ENCODE measurements at regions of chr1 and their contacts with region 1.

Region 1: DNA sequence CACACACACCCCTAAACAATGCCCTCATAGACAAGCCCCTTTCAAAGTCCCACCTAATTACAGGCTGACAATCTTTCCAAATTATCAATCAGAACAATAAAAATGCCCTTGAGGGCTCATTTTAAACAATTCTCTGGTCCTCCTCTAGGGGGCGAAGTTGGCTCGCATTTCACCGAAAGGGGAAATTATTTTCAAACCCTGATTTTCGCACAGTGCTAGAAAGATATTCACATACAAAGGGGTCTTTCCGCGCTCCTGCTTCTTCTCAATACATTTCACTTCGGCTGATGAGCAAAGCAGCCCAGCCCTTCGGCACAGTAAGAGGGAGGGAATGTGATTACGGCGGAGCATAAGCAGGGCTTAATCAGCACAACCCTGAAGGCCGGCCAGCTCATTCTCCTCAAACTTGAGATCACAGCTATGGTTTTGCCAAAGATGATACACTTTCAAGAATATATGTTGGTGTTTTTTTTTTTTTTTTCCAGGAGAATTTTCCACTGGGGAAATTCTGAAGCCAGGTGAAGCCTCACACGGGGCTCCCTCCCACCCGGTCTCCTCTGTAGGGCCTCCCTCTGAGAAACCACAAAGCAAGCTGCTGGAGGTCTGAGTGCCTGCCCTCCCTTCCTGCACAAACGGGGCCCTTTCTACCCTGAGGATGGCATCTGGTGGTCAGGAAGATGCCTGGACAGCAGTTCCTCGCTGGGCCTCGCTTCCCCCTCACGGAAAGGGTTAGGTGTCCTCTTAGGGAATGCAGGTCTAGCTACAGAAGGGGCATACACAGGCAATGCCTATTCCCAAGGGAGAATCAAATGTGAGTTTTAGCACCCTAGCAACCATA is 66.9 kb downstream of the GNG12 start:
- DNase-seq: peak; percentile 63
- H3K4me3 Mint-ChIP-seq: peak overlapping the region; percentile 0
- H3K27ac Mint-ChIP-seq: peak overlapping the region; percentile 57
- H3K4me1 Mint-ChIP-seq: peaks cover 17% of the 10 kb centered on the region
- H3K27me3 Mint-ChIP-seq: no peaks in the 10 kb centered on the region
- CTCF ChIP-seq: peak; percentile 84

Region 2: DNA sequence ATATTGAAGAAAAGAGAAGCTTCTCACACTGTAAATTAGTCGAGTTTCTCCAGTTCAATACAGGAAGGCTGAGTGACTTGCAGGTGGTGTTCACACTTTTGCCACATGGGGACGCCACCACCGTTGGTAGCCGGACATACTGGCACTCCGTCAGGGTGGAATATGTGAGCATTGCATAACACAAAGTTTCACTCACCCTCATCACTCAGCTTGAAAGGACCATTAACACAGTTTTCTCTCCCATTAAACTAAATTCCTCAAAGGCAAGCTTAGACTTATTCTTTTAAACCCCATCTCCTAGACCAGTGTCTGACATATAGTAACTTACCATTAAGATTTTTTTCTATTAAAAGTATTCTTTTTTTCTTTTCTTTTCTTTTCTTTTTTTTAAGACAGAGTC is 230.9 kb before region 1 on chr1:
- CTCF ChIA-PET with region 1: interaction called, 386 read pairs
- POLR2A ChIA-PET with region 1: interaction called, 21 read pairs
- intact Hi-C with region 1: no loop called
- DNase-seq: peak; percentile 85
- H3K4me3 Mint-ChIP-seq: no peak overlapping the region
- H3K27ac Mint-ChIP-seq: peak overlapping the region; percentile 12
- H3K4me1 Mint-ChIP-seq: peaks cover 6% of the 10 kb centered on the region
- H3K27me3 Mint-ChIP-seq: no peaks in the 10 kb centered on the region
- CTCF ChIP-seq: peak; percentile 95

Region 3: GRCh38 chr1:67599085-67599484 is 167.3 kb before region 1 on chr1:
- CTCF ChIA-PET with region 1: no interaction called
- POLR2A ChIA-PET with region 1: no interaction called
- intact Hi-C with region 1: no loop called
- DNase-seq: no peak
- H3K4me3 Mint-ChIP-seq: no peak overlapping the region
- H3K27ac Mint-ChIP-seq: no peak overlapping the region
- H3K4me1 Mint-ChIP-seq: no peaks in the 10 kb centered on the region
- H3K27me3 Mint-ChIP-seq: no peaks in the 10 kb centered on the region
- CTCF ChIP-seq: no peak

Region 4: DNA sequence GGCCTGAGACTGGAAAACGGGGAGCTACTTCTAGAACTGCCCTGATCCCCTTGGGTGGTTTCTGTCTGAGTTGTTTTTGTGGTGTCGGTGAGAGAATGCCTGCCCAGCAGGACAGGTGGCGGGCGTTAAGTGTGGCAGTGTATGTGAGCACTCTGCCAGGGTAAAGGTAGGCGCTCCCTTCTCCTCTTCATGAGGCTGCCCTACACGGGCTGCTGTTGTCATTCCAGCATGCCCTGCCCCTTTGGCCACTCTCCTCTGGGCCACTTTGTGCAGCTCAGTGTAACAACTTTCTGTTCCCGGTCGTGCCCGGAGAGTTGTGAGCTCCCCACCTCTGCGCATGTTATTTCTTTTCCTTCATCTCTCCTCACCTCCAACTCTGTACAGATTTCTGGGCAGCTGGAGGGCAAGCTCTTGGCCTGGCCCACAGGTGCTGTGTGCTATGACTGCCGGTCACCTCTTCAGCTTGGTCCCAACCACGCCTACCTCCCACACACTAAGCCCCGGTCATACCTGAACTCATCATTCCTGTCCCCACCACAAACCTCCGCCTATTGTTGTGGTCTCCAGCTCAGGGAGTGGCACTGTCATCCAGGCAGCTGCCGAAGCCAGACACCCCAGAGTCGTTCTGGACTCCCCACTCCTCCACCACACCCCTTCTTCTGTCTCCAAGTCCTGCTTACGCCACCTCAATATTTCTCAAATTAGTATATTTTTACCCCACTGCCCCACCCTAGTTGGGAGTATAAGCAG is 12.4 kb before region 1 on chr1:
- CTCF ChIA-PET with region 1: interaction called, 49 read pairs
- POLR2A ChIA-PET with region 1: interaction called, 14 read pairs
- intact Hi-C with region 1: no loop called
- DNase-seq: peak; percentile 69
- H3K4me3 Mint-ChIP-seq: peak overlapping the region; percentile 38
- H3K27ac Mint-ChIP-seq: peak overlapping the region; percentile 89
- H3K4me1 Mint-ChIP-seq: peaks cover 56% of the 10 kb centered on the region
- H3K27me3 Mint-ChIP-seq: no peaks in the 10 kb centered on the region
- CTCF ChIP-seq: no peak

Region 5: GRCh38 chr1:67791686-67792475 is 25.5 kb after region 1 on chr1:
- CTCF ChIA-PET with region 1: interaction called, 28 read pairs
- POLR2A ChIA-PET with region 1: interaction called, 3 read pairs
- intact Hi-C with region 1: no loop called
- DNase-seq: peak; percentile 72
- H3K4me3 Mint-ChIP-seq: peak overlapping the region; percentile 28
- H3K27ac Mint-ChIP-seq: peak overlapping the region; percentile 88
- H3K4me1 Mint-ChIP-seq: peaks cover 65% of the 10 kb centered on the region
- H3K27me3 Mint-ChIP-seq: no peaks in the 10 kb centered on the region
- CTCF ChIP-seq: no peak

Region 6: DNA sequence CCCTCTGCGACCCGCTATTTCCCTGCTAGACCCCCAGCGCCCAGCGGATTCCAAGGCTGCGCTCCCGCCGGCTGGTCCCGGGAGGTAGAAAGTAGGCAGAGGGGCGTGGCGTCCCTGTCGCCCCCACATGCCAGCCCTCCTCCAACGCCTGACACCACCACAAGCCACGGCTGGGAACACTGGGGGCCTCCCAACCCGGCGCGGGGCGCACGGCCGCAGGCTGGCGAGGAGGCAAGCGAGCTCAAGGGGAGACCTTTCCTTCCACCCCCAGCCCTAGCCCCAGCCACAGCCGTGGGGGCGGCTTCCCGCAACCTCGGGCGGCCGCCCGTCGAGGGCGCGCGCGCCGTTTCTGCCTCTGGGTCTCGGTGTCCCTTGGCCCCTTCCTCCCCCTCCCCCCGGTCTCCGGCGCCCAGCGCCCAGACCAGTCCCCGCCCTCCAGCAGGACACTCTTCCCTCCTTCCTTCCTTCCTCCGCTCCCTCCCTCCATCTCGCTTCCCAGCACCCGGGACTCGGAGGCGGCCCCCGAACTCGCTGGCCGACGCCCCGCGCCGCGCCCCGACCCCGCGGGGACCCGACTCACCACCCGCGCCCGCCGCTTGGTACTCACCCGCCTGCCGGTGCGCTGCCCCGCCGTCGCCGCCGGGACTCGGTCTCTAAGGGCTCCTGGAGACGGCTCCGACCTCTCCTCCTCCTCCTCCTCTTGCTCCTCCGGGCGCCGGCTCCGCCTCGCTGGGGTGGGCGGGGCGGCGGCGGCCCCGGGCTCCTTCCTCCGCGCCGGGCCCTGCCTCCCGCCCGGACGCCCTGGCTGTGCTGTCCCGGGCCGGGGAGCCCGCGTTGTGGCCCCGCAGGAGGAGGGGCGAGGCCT is 66.6 kb after region 1 on chr1 and contains the start of gene GNG12:
- CTCF ChIA-PET with region 1: interaction called, 174 read pairs
- POLR2A ChIA-PET with region 1: interaction called, 56 read pairs
- intact Hi-C with region 1: loop called (anchors 1 kb)
- DNase-seq: peak; percentile 83
- H3K4me3 Mint-ChIP-seq: peak within 1 kb of the TSS; percentile 92
- H3K27ac Mint-ChIP-seq: peak within 1 kb of the TSS; percentile 99
- H3K4me1 Mint-ChIP-seq: peaks cover 28% of the 10 kb centered on the region
- H3K27me3 Mint-ChIP-seq: no peaks in the 10 kb centered on the region
- CTCF ChIP-seq: no peak
- total RNA-seq, gene GNG12: 117 and 135 TPM in 2 replicates

Region 7: DNA sequence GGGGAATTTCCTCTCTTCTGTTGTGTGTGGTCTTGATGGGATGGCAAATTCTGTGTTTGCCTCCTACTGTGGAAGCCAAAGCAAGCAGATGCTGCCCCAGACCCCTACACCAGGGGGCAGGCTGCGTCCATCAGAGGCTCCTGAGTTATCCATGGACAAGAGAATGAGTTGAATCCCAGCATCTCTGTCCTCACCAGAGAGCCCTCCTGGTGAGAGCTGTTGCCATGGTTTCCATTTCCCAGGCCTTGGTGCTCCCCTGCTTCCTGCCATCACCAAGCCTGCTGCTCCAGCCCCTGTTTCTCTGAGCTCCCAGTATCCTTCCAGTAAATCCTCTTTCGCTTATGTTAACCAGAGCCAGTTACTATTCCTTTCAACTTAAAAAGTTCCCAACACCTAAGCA is 87.3 kb after region 1 on chr1:
- CTCF ChIA-PET with region 1: interaction called, 70 read pairs
- POLR2A ChIA-PET with region 1: interaction called, 4 read pairs
- intact Hi-C with region 1: loop called (anchors 1 kb)
- DNase-seq: peak; percentile 71
- H3K4me3 Mint-ChIP-seq: no peak overlapping the region
- H3K27ac Mint-ChIP-seq: no peak overlapping the region
- H3K4me1 Mint-ChIP-seq: peaks cover 16% of the 10 kb centered on the region
- H3K27me3 Mint-ChIP-seq: no peaks in the 10 kb centered on the region
- CTCF ChIP-seq: peak; percentile 92

Region 8: GRCh38 chr1:68120136-68120791 is 353.9 kb after region 1 on chr1:
- CTCF ChIA-PET with region 1: interaction called, 28 read pairs
- POLR2A ChIA-PET with region 1: no interaction called
- intact Hi-C with region 1: no loop called
- DNase-seq: peak; percentile 71
- H3K4me3 Mint-ChIP-seq: no peak overlapping the region
- H3K27ac Mint-ChIP-seq: no peak overlapping the region
- H3K4me1 Mint-ChIP-seq: peaks cover 5% of the 10 kb centered on the region
- H3K27me3 Mint-ChIP-seq: no peaks in the 10 kb centered on the region
- CTCF ChIP-seq: peak; percentile 82